ENCODE measurements at regions of chr11 and their contacts with region 1.

Region 1: DNA sequence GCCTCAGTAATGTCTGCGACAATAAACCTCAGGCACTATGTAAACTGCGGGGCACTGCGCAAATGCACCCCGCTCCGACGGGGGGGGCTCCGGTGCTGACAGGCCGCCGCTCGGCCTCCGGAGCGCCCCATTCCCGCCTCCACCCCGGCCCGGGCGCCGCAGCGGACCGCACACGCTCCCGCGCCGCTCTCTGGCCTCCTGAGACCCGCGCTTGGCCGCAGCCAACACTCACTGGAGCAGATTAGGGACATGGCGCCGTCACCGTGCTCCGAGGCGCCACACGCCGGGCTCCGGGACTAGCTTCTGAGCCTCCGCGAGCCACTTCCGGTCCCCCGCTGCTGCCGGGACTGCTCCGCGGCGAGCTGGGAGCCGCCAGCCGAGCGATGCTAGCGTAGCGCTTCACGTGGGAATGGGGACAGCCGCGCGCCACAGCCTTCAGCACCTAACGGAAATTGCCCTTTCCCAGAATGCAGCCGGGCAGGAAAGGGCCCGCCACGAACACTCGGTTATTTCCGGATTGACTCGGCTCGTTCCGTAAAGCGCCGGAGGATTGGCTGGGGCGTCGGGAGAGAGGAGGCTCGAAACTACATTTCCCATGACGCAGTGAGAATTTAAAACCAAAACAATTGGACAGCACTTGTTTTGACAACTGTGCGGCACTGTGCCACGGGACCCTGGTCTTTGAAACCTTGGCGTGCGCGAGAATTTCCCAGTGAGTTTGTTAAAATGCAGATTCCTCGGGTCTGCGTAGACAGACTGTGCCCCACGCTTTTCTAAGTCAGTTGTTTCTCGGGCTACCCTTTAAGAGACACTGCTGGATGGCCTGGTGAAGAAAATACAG is at the start of gene PRPF19:
- DNase-seq: peak; percentile 100
- H3K4me3 Mint-ChIP-seq: peak within 1 kb of the TSS; percentile 91
- H3K27ac Mint-ChIP-seq: peak within 1 kb of the TSS; percentile 92
- H3K4me1 Mint-ChIP-seq: peaks cover 29% of the 10 kb centered on the region
- H3K27me3 Mint-ChIP-seq: peaks cover 5% of the 10 kb centered on the region
- total RNA-seq, gene PRPF19: 219 TPM in 2 replicates

Region 2: GRCh38 chr11:60841797-60842667 is 64.3 kb before region 1 on chr11 and contains the start of gene CCDC86:
- intact Hi-C with region 1: loop called (anchors 2 kb)
- DNase-seq: peak; percentile 100
- H3K4me3 Mint-ChIP-seq: peak within 1 kb of the TSS; percentile 95
- H3K27ac Mint-ChIP-seq: peak within 1 kb of the TSS; percentile 95
- H3K4me1 Mint-ChIP-seq: peaks cover 36% of the 10 kb centered on the region
- H3K27me3 Mint-ChIP-seq: no peaks in the 10 kb centered on the region
- total RNA-seq, gene CCDC86: 90.0 and 91.3 TPM in 2 replicates